WTC11 (cell line): ENCODE measurements at regions of chr17 and their contacts with region 1.

Region 1: DNA sequence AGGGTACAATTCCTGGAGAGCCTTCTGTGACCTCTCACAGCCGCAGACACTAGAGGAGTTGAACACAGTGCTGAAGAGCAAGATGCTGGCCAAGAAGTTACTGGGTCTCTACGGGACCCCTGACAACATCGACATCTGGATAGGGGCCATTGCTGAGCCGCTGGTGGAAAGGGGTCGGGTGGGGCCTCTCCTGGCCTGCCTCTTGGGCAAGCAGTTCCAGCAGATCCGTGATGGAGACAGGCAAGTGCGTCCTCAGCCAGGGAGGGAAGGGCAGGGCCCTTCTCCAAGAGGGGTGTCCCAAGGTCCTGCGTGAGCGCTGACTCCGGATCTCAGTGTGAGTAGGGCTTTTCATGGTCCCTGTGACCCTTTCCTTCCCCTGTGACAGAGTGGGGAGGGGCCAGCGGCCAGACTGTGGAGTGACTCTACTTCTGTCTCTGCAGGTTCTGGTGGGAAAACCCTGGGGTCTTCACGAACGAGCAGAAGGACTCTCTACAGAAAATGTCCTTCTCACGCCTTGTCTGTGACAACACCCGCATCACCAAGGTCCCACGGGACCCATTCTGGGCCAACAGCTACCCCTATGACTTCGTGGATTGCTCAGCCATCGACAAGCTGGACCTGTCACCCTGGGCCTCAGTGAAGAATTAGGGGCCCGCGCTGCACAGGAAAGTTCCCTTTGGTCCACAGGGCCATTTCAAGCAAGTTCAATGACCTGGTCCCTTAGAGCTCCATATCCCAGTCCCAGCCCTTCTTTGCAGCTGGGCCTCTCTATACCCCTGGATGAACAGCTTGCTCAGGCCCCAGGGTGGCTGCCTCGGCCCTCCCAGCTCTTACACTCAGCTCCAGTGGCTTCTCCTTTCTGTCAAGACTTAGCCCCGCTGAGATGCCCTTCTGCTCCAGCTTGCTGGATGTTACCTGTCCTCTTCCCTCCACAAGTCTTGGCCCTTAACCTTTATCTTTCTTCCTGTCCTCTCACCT is 13.1 kb downstream of the MPO start:
- DNase-seq: no peak
- ATAC-seq: no peak
- H3K4me3 Mint-ChIP-seq: no peak overlapping the region
- H3K27ac Mint-ChIP-seq: no peak overlapping the region
- H3K4me1 Mint-ChIP-seq: no peaks in the 10 kb centered on the region
- H3K27me3 Mint-ChIP-seq: peaks cover 32% of the 10 kb centered on the region
- CTCF ChIP-seq: no peak

Region 2: DNA sequence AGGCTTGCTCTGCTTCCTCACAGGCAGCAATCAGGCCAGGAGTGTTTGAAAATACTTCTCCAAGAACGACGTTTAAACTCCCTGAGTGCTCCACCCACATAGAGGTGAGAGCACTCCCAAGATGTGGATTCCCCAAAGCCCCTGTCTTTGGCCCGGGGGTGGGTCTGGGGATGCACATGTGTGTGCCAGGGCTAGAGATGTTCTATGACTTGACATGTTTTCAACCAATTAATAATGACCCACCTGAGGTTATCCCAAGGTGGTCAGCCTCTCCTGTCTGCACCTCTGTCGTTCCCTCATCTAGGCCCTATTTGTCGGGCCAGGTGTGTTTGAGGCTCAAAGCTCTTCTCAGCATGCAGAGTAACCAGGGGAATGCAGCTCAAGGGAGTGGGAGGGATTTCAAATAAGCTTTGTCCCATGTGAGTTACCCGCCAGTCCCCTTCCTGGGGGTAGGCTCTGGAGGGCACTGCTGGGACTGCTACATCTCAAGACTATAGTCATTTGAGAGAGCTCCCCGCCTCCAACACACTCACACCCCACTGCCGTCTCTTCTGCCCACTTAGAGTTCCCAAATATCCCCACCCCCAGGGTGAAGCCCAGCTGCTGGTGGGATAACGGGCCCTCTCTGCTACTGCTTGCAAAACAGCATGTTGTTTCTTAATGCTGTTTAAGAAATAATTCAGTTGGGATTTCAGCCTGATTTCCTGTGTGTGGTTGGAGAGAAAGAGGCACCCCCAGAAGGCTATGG is 16.9 kb after region 1 on chr17:
- CTCF ChIA-PET with region 1: interaction called, 3 read pairs
- POLR2A ChIA-PET with region 1: interaction called, 10 read pairs
- DNase-seq: peak; percentile 51
- ATAC-seq: peak; percentile 97
- H3K4me3 Mint-ChIP-seq: no peak overlapping the region
- H3K27ac Mint-ChIP-seq: 0 out of 2 replicates have a peak overlapping the region, but pooled peaks have one; percentile 17
- H3K4me1 Mint-ChIP-seq: peaks cover 20% of the 10 kb centered on the region
- H3K27me3 Mint-ChIP-seq: peaks cover 4% of the 10 kb centered on the region
- CTCF ChIP-seq: no peak